GM12878 (cell line): ENCODE measurements at regions of chr1 and their contacts with region 1.

Region 1: DNA sequence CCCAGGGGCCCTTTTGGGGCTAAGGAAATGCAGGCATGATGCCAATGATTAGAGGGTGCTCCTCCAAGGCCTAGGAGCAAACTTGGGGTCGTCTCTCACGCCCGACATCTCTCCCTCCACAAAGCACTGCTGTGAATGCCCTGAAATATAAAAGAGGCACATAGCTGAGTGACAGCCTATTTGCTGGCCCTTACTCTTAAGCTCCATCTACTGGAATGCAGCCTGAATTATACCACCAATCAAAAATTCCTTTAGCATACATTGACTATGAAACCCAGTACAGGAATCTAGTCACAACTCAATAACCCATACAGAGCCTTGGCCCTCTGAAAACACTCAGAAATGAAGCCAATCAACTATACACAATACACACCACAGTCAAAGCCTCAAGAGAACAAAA is 105.5 kb downstream of the LRIG2 start:
- DNase-seq: no peak
- ATAC-seq: no peak
- H3K4me3 ChIP-seq: no peak overlapping the region
- H3K27ac ChIP-seq: no peak overlapping the region
- H3K4me1 ChIP-seq: peaks cover 6% of the 10 kb centered on the region
- H3K27me3 ChIP-seq: no peaks in the 10 kb centered on the region
- CTCF ChIP-seq: no peak
- EP300 ChIP-seq: no peak
- POLR2A ChIP-seq: no peak
- RAD21 ChIP-seq: 0 out of 2 replicates have a peak, but pooled peaks have one; percentile 19

Region 2: DNA sequence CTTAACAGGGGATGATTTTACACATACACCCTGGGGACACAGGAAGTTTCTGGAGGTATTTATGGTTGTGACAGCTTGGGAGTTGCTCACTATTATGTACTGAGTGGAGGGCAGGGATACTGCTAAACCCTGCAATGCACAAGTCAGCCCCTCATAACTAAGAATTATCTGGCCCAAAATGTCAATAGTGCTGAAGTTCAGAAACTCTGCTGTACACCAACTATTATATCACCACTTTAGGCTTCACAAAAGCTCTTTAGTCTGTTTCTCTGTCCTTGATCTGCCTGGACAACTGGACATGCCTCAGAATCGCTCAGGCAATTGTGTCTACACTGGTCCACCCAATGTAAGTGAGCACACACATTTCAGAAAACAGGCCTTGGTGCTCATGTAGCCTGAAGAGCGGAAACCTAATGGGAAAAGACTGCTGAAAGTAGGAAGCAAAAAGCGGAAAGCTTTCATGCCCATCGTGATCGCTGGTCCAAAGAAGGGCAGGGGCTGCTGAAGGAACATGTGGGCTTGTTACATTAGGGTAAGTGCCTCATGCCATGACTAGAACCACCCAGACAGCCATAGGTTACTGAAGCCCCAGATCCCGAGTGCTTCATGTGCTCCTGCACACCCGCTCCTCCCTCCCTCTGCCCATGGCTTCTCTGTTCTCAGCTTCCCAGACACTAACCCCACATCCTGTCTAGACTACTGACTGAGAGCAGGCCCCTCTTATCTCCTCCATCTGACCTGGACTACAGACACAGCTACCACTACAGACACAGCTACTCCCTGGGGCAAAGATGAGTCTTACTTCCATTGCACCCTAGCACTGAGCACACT is 32.1 kb before region 1 on chr1:
- CTCF ChIA-PET with region 1: interaction called, 3 read pairs
- POLR2A ChIA-PET with region 1: interaction called, 11 read pairs
- RAD21 ChIA-PET with region 1: interaction called, 3 read pairs
- SMC1A ChIA-PET with region 1: interaction called, 3 read pairs
- in situ Hi-C with region 1: no loop called
- intact Hi-C with region 1: no loop called
- DNase-seq: no peak
- ATAC-seq: peak; percentile 38
- H3K4me3 ChIP-seq: no peak overlapping the region
- H3K27ac ChIP-seq: no peak overlapping the region
- H3K4me1 ChIP-seq: no peaks in the 10 kb centered on the region
- H3K27me3 ChIP-seq: no peaks in the 10 kb centered on the region
- CTCF ChIP-seq: no peak
- EP300 ChIP-seq: no peak
- POLR2A ChIP-seq: no peak
- RAD21 ChIP-seq: no peak